ENCODE measurements at regions of chr11 and their contacts with region 1.

Region 1: GRCh38 chr11:90818196-90818735 is 595.4 kb upstream of the CHORDC1 start:
- H3K4me3 Mint-ChIP-seq: no peak overlapping the region
- H3K27ac Mint-ChIP-seq: no peak overlapping the region
- H3K4me1 Mint-ChIP-seq: no peaks in the 10 kb centered on the region
- H3K27me3 Mint-ChIP-seq: no peaks in the 10 kb centered on the region

Region 2: DNA sequence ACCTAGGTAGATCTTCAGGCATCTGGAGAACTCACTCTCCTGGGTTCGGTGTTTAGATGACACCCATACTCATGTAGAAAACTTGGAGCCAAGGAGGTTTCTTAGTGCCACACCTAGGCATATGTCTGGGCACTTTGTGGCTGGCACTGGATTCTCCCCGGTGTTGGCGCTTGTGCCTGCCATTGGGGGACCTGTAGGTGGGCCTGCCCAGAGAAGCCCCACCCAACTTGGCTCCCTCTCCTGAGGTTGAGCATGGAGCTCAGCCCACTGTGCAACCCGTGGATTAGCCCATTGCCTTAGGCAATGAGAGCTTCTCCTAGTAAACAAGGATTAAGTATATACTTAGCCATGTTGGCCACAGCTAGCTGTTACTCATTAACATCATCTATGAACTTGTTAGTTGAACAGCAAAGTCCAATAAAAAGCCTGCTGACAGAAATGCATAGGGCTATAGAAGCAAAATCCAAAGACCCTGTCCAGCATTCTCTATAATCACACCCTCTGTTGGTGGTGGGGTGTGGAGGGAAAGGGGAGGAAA is 259.9 kb before region 1 on chr11:
- intact Hi-C with region 1: no loop called
- H3K4me3 Mint-ChIP-seq: no peak overlapping the region
- H3K27ac Mint-ChIP-seq: no peak overlapping the region
- H3K4me1 Mint-ChIP-seq: no peaks in the 10 kb centered on the region
- H3K27me3 Mint-ChIP-seq: no peaks in the 10 kb centered on the region

Region 3: GRCh38 chr11:90874986-90875385 is 56.7 kb after region 1 on chr11:
- intact Hi-C with region 1: loop called (anchors 10 kb)
- H3K4me3 Mint-ChIP-seq: no peak overlapping the region
- H3K27ac Mint-ChIP-seq: no peak overlapping the region
- H3K4me1 Mint-ChIP-seq: no peaks in the 10 kb centered on the region
- H3K27me3 Mint-ChIP-seq: no peaks in the 10 kb centered on the region

Measured in dendritic cell treated with granulocyte-macrophage colony-stimulating factor and Interleukin-4, amounts not matched to agents 40 ng/mL and 50 ng/mL, for 4 days (primary cell).